K562 (cell line): ENCODE measurements at regions of chr7 and their contacts with region 1.

Region 1: GRCh38 chr7:127678947-127679346 is 27.0 kb downstream of the SND1 start:
- DNase-seq: no peak
- ATAC-seq: no peak
- H3K4me3 ChIP-seq: no peak overlapping the region
- H3K27ac ChIP-seq: no peak overlapping the region
- H3K4me1 ChIP-seq: no peaks in the 10 kb centered on the region
- H3K27me3 ChIP-seq: no peaks in the 10 kb centered on the region
- CTCF ChIP-seq: no peak
- EP300 ChIP-seq: no peak
- POLR2A ChIP-seq: no peak
- RAD21 ChIP-seq: no peak

Region 2: DNA sequence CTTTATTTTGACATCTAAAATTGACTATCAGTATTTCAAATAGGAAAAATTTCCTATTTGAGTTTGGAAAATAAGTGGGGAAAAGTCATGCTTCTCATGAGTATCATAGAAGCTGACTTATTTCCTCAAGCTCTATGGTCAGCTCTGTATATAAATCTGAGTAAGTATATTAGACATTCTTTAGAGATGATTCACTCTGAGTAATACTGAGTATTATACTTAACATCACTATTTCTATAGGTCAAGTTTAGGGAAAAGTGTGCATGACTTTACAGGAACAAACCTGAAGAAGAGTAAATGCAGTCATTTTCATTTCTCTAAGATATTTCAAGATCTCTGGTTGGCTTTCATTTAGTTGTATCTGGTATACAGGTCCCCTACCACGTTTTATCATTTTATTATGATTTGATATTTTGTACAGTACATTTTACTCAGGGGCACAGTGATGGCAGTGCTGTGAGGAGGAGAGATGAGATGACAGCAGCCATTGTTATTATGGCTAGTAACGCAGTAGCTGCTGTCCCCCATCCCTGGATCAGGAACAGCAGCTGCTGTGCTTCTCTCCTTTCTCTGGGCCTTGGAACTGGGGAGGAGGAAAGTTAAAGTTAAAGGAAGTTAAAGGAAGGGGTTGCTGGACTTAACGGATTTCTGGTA is 11.8 kb before region 1 on chr7:
- CTCF ChIA-PET with region 1: no interaction called
- POLR2A ChIA-PET with region 1: interaction called, 11 read pairs
- in situ Hi-C with region 1: no loop called
- intact Hi-C with region 1: no loop called
- DNase-seq: no peak
- ATAC-seq: no peak
- H3K4me3 ChIP-seq: no peak overlapping the region
- H3K27ac ChIP-seq: no peak overlapping the region
- H3K4me1 ChIP-seq: no peaks in the 10 kb centered on the region
- H3K27me3 ChIP-seq: no peaks in the 10 kb centered on the region
- CTCF ChIP-seq: no peak
- EP300 ChIP-seq: no peak
- POLR2A ChIP-seq: no peak
- RAD21 ChIP-seq: no peak